ENCODE measurements at regions of chr10 and their contacts with region 1.

Region 1: DNA sequence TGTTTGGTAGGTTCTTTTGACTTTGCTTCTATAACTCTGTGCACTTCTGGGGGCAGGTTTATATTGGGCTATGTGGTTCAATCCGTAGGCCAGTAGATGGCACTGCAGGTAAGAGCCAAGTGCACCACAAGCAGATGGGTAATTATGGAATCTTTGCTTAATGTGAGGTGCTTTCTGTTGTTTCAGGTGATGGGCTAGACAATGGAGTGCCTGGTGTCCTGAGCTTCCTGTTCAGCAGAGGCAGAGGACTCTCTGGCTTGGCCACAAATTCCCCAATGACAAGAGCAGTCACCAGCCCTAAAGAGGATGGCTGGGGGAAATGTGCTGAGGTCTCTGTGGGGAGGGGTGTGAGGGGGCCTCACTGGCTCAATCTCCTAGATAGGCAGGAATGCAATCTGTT is 455.0 kb downstream of the CCSER2 start:
- DNase-seq: no peak
- ATAC-seq: peak in 3 of 4 donors; percentile 72 to 77 (median 74)
- H3K4me3 ChIP-seq: no peak overlapping the region
- H3K27ac ChIP-seq: no peak overlapping the region
- H3K4me1 ChIP-seq: peaks cover 0 to 3% (median 0%) of the 10 kb centered on the region in 12 donors
- H3K27me3 ChIP-seq: no peaks in the 10 kb centered on the region
- CTCF ChIP-seq: peak; percentile 34 to 66 (median 52)
- POLR2A ChIP-seq: no peak

Region 2: DNA sequence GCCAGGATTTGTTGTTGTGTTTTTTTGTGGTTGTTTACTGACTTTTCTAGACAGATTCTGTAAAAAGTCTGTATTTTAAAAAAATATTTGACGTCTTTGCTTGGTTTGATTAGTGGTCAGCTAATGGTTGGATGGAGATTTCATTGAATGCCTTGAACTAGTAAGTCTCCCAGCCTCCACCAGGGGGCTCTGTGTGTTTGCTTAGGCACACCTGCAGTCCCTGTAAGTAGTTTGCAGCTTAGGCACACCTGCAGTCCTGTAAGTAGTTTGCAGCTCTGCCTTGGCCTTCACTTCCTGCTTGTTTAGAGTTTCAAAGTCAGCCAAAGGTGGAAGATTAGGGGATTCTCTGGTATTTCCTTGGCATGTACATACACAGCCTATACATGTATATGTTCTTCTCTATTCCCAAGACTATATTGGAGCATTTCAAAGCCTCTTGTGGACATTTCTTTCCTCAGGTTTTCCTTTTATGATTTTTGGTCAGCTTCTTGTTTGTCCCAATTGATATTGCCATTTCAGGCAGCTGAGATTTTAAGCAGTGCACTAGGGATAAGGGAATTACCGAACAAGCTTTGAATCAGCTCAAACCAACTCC is 353.4 kb before region 1 on chr10:
- intact Hi-C with region 1: no loop called
- DNase-seq: peak; percentile 38 to 65 (median 60)
- ATAC-seq: peak in 3 of 4 donors; percentile 34 to 73 (median 54)
- H3K4me3 ChIP-seq: no peak overlapping the region
- H3K27ac ChIP-seq: no peak overlapping the region
- H3K4me1 ChIP-seq: peaks cover 2 to 90% (median 45%) of the 10 kb centered on the region in 12 donors
- H3K27me3 ChIP-seq: no peaks in the 10 kb centered on the region
- CTCF ChIP-seq: peak; percentile 41 to 73 (median 58)
- POLR2A ChIP-seq: no peak

Region 3: GRCh38 chr10:84811078-84811477 is 27.7 kb after region 1 on chr10:
- intact Hi-C with region 1: no loop called
- DNase-seq: no peak
- ATAC-seq: no peak
- H3K4me3 ChIP-seq: no peak overlapping the region
- H3K27ac ChIP-seq: no peak overlapping the region
- H3K4me1 ChIP-seq: no peaks in the 10 kb centered on the region
- H3K27me3 ChIP-seq: no peaks in the 10 kb centered on the region
- CTCF ChIP-seq: no peak
- POLR2A ChIP-seq: no peak

Region 4: DNA sequence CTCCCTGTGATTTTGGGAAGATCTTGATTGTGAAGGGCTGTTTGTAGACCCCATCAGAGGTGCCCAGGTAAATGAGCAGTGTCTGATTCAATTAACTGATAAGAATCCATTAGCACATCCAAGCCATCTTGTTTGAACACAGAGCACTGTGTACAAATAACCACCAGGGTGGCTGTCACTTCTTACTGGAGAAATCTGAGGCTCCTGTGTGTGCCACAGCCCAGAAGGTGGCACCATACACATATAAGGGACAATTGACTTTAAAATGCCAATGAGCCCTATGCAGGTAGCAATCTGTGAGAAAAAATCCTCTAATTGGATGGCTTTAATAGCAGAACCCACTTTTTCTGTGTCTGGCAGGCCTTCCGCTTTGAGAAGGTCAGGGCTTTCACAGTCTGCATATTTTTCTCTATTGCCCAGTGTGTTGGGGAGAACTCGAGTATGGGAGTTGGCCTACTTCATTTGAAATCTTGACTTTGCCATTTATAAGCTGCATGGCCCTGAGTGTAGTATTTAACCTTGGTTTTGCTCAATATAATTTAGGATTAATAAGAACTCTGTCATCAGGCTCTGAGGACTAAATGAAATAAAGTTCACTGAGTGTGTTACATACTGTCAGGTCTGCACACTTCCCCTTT is 62.4 kb after region 1 on chr10:
- intact Hi-C with region 1: loop called in 1 of 10 experiments (anchors 2 kb)
- DNase-seq: peak in 1 of 5 donors; percentile 31
- ATAC-seq: peak; percentile 66 to 78 (median 70)
- H3K4me3 ChIP-seq: no peak overlapping the region
- H3K27ac ChIP-seq: no peak overlapping the region
- H3K4me1 ChIP-seq: peaks cover 0 to 13% (median 0%) of the 10 kb centered on the region in 12 donors
- H3K27me3 ChIP-seq: no peaks in the 10 kb centered on the region
- CTCF ChIP-seq: peak in 11 of 12 donors; percentile 32 to 58 (median 45)
- POLR2A ChIP-seq: no peak

Region 5: DNA sequence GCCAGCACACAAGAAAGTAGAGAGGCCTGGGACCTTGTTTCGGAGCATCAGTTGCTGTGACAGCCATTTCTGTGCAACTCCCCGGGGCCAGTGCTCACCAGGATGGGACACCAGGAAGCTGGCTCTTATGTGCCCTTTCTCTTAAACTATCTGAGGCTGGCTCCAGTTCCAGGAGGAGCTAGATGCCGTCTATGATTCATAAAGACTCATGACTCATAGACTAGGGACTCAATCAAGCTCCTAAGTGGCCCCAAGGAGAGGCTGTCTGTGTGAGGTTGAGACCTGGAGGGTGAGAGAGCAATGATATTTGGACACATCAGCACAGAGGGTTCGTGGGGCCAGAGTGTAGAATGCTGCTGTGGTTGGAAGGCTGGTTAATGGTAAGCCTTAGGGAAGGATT is 125.1 kb after region 1 on chr10:
- intact Hi-C with region 1: loop called in 1 of 10 experiments (anchors 10 kb)
- DNase-seq: no peak
- ATAC-seq: no peak
- H3K4me3 ChIP-seq: no peak overlapping the region
- H3K27ac ChIP-seq: no peak overlapping the region
- H3K4me1 ChIP-seq: no peaks in the 10 kb centered on the region
- H3K27me3 ChIP-seq: no peaks in the 10 kb centered on the region
- CTCF ChIP-seq: no peak
- POLR2A ChIP-seq: no peak